B cell (primary cell): ENCODE measurements at regions of chr20 and their contacts with region 1.

Region 1: DNA sequence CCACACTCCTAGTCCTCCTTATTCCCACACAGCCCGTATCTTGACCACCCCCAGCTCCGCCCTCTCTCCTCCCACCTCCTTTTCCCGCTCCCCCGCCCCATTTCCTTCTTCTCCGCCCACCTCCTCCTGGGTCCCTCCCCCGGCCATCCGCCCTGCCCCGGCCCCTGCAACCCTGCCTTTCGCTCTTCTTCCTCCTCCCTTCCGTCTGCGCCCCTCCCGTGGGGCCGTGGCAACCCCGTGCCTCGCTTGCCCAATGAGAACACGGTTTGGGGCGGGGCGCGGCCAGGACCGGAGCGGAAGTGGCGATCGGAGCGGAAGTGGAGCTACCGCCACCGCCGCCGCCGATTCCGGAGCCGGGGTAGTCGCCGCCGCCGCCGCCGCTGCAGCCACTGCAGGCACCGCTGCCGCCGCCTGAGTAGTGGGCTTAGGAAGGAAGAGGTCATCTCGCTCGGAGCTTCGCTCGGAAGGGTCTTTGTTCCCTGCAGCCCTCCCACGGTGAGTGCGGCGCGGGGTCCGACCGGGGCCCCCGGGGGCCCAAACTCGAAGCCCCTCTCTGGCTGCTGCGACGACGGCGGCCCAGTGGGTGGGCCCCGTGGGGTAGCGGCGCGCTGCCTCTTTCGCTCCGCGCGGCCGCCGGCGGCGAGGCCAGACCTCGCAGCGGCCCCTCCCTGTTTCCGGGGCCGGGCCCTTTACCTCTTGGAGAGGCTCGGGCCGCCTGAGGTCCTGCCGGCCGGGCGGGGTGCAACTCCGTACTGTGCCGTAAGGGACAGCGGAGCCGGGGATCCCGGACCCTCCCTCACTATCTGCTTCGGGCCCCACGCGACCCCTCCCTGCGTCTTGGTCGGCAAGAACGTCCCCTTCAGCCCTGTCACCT is at the start of gene YWHAB:
- DNase-seq: peak; percentile 97
- ATAC-seq: peak; percentile 98
- H3K4me3 ChIP-seq: peak within 1 kb of the TSS; percentile 71 to 93 (median 90)
- H3K4me3 Mint-ChIP-seq: peak within 1 kb of the TSS; percentile 95
- H3K27ac ChIP-seq: peak within 1 kb of the TSS; percentile 87 to 90
- H3K27ac Mint-ChIP-seq: peak within 1 kb of the TSS; percentile 94
- H3K4me1 ChIP-seq: peaks cover 42 to 48% of the 10 kb centered on the region in 2 donors
- H3K4me1 Mint-ChIP-seq: peaks cover 59% of the 10 kb centered on the region
- H3K27me3 ChIP-seq: no peaks in the 10 kb centered on the region
- H3K27me3 Mint-ChIP-seq: no peaks in the 10 kb centered on the region
- CTCF ChIP-seq: no peak
- total RNA-seq, gene YWHAB: 200 and 205 TPM in 2 replicates

Region 2: DNA sequence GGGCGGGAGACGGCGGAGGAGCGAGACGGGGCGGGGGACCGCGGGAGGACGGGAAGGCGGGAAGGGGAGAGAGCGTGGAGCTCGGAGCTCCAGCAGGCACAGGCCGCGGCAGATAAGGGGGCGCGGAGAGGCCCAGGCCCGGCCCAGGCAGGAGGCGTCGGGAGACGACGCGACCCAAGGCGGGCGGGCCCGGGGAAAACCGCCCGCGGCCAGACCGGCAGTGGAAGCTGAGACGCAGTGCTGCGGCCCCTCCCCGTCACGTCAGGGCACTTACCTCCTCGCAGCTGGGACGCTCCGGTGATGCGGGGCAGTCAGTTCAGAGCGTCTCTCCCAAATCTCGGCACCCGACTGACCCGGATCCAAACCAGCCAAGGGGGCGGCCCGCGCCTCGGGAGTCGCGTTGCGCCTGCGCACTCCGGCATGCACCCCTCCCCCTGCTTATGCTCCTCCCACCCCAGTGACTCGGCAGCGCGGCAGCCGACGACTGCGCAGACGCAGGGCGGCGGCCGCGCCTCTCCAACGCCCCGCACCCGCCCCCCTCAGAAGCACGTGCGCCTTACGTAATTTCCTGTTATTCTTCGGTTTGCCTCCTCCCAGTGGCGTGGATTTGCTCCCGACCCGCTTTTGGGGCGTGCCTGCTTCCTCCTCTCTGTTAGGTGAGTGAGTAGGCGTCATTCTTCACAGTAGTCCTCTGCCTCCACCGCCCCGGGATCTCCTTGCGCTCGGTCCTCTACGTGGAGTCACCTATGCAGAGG is 675.0 kb before region 1 on chr20 and contains the start of gene OSER1:
- CTCF ChIA-PET with region 1: no interaction called
- POLR2A ChIA-PET with region 1: no interaction called
- intact Hi-C with region 1: loop called (anchors 1 kb)
- DNase-seq: peak; percentile 99
- ATAC-seq: peak; percentile 80
- H3K4me3 ChIP-seq: peak within 1 kb of the TSS; percentile 74 to 100 (median 96)
- H3K4me3 Mint-ChIP-seq: peak within 1 kb of the TSS; percentile 88
- H3K27ac ChIP-seq: peak within 1 kb of the TSS; percentile 95 to 99
- H3K27ac Mint-ChIP-seq: peak within 1 kb of the TSS; percentile 99
- H3K4me1 ChIP-seq: peaks cover 36 to 43% of the 10 kb centered on the region in 2 donors
- H3K4me1 Mint-ChIP-seq: peaks cover 60% of the 10 kb centered on the region
- H3K27me3 ChIP-seq: no peaks in the 10 kb centered on the region
- H3K27me3 Mint-ChIP-seq: no peaks in the 10 kb centered on the region
- CTCF ChIP-seq: no peak
- total RNA-seq, gene OSER1: 80.0 and 85.4 TPM in 2 replicates

Region 3: DNA sequence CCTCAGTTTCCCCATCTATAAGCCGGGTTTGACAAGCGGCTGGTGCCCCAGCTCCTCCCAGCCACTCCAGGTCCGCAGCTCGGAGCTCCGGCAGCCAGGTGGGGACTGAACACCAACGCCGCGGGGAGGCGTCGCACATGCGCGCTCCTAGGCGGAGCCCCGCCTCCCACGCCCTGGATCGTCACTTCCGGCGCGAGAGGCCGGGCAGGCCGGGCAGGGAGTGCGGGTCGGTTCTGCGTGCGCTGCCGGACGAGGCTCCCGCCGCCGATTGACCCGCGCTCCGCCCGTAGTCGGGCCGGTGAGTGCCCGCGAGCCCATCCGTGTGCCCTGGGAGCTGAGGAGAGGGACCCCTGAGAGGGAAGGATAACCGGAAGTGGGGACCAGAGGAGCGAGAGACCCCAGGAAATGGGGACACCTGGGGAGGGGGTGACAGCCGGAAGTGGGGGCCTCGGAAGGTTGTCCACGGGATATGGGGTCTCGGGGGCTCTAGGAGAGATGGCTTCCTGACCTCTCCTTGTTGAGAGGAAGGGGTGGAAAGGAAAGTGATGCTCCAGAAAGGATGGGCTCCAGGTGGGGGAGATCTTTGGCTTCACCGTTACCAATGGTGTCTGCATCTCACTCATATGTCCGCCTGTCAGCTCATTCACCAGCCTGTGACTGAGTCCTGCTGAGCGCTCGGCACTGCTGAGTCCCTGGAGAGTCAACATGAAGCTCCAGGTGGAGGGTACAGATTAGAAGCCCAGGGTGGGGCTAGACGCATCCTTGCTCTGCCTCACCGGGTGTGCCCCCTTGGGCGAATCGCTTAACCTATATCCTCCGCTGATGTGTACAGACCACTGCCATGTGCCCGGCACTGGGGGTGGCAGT is 409.7 kb before region 1 on chr20 and contains the start of gene TTPAL:
- CTCF ChIA-PET with region 1: no interaction called
- POLR2A ChIA-PET with region 1: no interaction called
- intact Hi-C with region 1: loop called (anchors 5 kb)
- DNase-seq: peak; percentile 93
- ATAC-seq: peak; percentile 94
- H3K4me3 ChIP-seq: peak within 1 kb of the TSS; percentile 70 to 99 (median 78)
- H3K4me3 Mint-ChIP-seq: peak within 1 kb of the TSS; percentile 97
- H3K27ac ChIP-seq: peak within 1 kb of the TSS; percentile 90 to 93
- H3K27ac Mint-ChIP-seq: peak within 1 kb of the TSS; percentile 95
- H3K4me1 ChIP-seq: peaks cover 23 to 34% of the 10 kb centered on the region in 2 donors
- H3K4me1 Mint-ChIP-seq: peaks cover 43% of the 10 kb centered on the region
- H3K27me3 ChIP-seq: no peaks in the 10 kb centered on the region
- H3K27me3 Mint-ChIP-seq: peaks cover 2% of the 10 kb centered on the region
- CTCF ChIP-seq: no peak
- total RNA-seq, gene TTPAL: 26.8 and 27.8 TPM in 2 replicates

Region 4: DNA sequence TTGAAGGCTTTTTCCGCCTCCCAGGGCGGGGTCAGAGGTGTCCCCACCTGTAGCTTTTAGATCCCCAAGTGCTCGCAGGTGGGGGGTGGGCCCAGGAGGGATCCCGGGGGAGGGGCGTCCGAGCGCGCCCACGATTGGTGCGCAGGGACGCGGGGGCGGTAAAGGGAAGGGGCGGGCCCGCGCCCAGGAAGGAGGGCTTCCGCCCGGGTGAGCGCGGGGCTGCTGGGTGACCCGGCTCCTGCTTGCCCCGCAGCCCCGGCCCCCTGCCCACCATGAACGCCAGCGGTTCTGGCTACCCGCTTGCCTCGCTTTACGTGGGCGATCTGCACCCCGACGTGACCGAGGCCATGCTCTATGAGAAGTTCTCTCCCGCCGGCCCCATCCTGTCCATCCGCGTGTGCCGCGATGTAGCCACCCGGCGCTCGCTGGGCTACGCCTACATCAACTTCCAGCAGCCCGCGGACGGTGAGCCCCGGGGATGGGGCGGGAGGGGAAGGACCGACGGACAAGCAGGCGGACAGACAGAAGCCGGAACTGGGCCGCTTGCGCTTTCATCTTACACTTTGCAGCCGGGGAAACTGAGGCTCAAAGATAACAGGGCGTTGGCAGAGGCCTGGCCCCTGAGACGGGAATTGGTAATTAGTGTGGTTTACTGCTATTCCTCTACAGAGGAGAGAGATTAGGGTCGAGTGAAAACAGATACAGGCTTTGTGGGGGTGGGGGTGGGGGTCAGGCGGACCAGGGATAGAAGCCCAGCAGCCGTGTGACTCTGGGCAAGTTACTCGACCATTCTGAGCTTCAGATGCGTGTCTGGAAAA is 24.5 kb after region 1 on chr20 and contains the start of gene PABPC1L:
- CTCF ChIA-PET with region 1: interaction called, 13 read pairs
- POLR2A ChIA-PET with region 1: interaction called, 3 read pairs
- intact Hi-C with region 1: loop called (anchors 1 kb)
- DNase-seq: peak; percentile 84
- ATAC-seq: peak; percentile 98
- H3K4me3 ChIP-seq: peak within 1 kb of the TSS; percentile 50 to 85 (median 81)
- H3K4me3 Mint-ChIP-seq: peak within 1 kb of the TSS; percentile 91
- H3K27ac ChIP-seq: peak within 1 kb of the TSS in 1 of 2 donors; percentile 65
- H3K27ac Mint-ChIP-seq: peak within 1 kb of the TSS; percentile 65
- H3K4me1 ChIP-seq: peaks cover 13 to 18% of the 10 kb centered on the region in 2 donors
- H3K4me1 Mint-ChIP-seq: peaks cover 24% of the 10 kb centered on the region
- H3K27me3 ChIP-seq: no peaks in the 10 kb centered on the region
- H3K27me3 Mint-ChIP-seq: no peaks in the 10 kb centered on the region
- CTCF ChIP-seq: no peak
- total RNA-seq, gene PABPC1L: 100 and 105 TPM in 2 replicates

Region 5: DNA sequence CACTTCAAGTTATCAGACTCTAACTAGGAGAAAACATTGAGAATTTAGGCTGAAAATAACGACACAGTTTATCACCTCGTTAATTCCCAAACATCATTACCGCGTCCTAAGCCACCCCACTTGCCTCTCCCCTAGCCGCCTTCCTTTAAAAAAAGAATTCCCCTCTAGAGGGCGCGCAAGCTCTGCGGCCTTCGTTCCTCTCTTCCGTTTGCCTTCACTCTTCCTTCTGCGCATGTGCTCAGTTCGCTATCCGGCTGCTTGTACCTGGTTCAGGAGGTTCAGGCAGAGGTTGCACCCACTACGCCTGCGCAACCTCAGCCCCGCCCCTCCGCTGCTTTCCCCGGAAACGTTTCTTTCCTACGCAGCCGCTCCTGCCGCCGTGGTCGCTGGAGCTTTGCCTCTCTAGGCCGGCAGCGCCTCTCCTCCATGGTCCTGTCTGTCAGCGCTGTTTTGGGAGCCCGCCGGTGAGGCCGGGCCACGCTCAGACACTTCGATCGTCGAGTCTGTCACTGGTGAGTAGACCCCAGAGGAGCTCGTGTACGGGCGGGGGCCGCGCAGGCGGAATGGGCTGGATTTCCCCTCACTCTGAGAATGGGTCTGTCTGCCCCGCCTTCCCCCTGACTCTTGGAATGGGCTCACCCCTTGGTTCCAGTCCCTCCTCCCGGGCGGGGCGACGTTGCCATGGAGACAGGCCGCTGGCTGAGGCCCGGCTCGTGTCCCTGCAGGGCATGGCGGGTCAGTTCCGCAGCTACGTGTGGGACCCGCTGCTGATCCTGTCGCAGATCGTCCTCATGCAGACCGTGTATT is 477.4 kb after region 1 on chr20 and contains the start of gene SYS1:
- CTCF ChIA-PET with region 1: no interaction called
- POLR2A ChIA-PET with region 1: no interaction called
- intact Hi-C with region 1: loop called (anchors 2 kb)
- DNase-seq: peak; percentile 99
- ATAC-seq: peak; percentile 82
- H3K4me3 ChIP-seq: peak within 1 kb of the TSS; percentile 79 to 88 (median 85)
- H3K4me3 Mint-ChIP-seq: peak within 1 kb of the TSS; percentile 99
- H3K27ac ChIP-seq: peak within 1 kb of the TSS; percentile 86 to 99
- H3K27ac Mint-ChIP-seq: peak within 1 kb of the TSS; percentile 99
- H3K4me1 ChIP-seq: peaks cover 47 to 49% of the 10 kb centered on the region in 2 donors
- H3K4me1 Mint-ChIP-seq: peaks cover 49% of the 10 kb centered on the region
- H3K27me3 ChIP-seq: peaks cover 0 to 5% (median 0%) of the 10 kb centered on the region in 4 experiments
- H3K27me3 Mint-ChIP-seq: no peaks in the 10 kb centered on the region
- CTCF ChIP-seq: peak; percentile 86
- total RNA-seq, gene SYS1: 57.7 and 61.4 TPM in 2 replicates